Motor neuron (in vitro differentiated cells): ENCODE measurements at regions of chr13 and their contacts with region 1.

Region 1: DNA sequence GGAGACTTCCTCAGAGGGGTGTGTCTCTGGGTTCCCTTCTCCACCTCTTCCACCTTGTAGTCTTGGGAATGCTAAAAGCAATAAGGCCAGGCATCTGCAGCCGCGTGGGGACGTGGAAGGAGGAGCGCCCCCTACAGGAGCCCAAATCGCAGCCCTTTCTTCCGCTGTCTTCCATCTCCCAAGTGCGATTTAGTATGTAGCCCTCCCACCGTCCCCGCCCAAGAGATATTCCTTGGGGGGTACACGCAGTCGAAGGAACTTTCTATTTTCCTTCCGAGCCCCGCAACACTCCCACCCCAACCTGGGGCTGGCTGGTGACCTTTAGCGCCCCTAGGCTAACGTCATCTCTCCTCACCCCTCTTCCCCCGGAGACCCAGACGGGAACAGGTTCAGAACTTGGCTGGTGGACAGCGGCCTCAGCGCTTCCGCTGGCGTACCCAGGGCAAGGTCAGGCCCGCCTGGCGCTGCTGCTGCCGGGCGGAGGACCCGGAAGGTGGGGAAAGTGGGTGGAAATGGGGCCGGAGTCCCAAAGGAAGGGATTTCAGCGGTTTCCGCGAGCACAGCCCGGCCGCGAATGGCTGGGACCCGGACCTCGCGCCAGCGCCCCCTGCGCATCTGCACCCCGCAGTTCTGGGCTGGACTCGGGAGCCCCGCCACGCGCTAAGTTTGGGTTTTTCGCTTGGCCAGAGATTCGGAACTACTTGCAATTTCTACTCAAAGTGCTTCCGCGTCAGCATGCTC is 2.1 kb upstream of the PCDH8 start:
- ATAC-seq: peak; percentile 10 to 90 (median 31)
- H3K4me3 ChIP-seq: peak overlapping the region; percentile 29 to 52 (median 40)
- H3K27ac ChIP-seq: peak overlapping the region; percentile 70 to 71
- H3K4me1 ChIP-seq: peaks cover 16 to 27% of the 10 kb centered on the region in 2 donors

Region 2: DNA sequence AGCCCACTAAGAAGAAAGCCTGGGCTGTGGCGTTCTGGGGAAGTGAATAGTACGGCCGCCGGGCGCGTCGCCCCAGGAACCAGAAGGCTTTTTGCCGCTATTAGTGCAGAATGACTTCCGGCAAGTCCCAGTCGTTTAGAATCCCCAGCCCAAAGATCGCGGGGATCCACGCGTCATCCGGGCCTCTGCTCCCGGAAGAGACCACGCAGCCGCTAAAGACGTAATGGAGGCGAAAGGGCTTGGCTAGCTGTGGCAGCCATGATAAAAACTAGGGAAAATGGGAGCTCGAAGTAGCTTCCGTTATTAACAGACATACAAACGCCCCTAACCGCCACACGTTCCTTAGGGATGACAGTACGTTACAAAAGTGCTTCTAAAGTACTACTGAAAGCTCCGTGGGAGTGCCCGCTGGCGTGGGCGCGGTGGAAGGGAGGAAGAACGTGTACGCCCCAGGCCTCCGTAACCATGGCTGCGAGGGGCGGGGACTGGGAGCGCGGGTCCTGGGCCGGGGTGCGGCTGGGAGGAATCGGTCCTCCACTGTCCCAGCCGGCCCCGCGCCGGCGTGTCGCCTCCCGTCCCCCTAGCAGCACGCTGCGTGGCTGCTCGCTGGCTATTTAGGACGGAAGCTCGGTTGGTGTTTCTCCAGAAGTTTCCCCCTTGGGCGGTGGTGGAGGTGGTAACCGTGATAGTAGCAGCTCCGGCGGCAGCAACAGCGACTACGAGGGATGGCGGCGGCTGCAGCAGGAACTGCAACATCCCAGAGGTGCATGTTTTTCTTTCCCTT is 198.2 kb before region 1 on chr13 and contains the start of gene SUGT1:
- in situ Hi-C with region 1: loop called in 1 of 9 experiments (anchors 25 kb)
- ATAC-seq: peak; percentile 91 to 98 (median 97)
- H3K4me3 ChIP-seq: peak within 1 kb of the TSS; percentile 45 to 71 (median 54)
- H3K27ac ChIP-seq: peak within 1 kb of the TSS; percentile 99 to 100
- H3K4me1 ChIP-seq: peaks cover 10 to 17% of the 10 kb centered on the region in 2 donors
- total RNA-seq, gene SUGT1: 55.3 to 68.2 (median 62.3) TPM

Region 3: DNA sequence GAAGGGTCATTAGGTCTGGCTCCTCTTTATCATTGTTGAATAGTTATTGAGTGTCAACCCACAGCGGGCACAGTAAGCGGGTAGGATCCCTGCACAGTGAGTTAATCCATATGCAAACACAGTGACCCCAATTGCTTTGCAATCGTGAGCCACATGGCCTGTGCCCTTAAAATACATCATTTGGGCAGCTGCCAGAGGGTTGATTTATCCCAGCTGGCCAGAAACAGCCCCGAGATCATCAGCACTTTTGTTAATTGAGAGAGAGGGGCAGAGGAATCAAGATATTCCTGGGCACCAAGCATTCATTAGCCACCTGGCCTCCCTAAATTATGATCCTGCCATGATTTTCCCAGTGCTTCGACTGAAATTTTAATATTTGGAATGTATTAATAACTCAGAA is 101.1 kb before region 1 on chr13:
- in situ Hi-C with region 1: no loop called
- ATAC-seq: peak in 5 of 8 experiments; percentile 45 to 76 (median 60)
- H3K4me3 ChIP-seq: no peak overlapping the region
- H3K27ac ChIP-seq: no peak overlapping the region
- H3K4me1 ChIP-seq: peaks cover 6 to 12% of the 10 kb centered on the region in 2 donors

Region 4: DNA sequence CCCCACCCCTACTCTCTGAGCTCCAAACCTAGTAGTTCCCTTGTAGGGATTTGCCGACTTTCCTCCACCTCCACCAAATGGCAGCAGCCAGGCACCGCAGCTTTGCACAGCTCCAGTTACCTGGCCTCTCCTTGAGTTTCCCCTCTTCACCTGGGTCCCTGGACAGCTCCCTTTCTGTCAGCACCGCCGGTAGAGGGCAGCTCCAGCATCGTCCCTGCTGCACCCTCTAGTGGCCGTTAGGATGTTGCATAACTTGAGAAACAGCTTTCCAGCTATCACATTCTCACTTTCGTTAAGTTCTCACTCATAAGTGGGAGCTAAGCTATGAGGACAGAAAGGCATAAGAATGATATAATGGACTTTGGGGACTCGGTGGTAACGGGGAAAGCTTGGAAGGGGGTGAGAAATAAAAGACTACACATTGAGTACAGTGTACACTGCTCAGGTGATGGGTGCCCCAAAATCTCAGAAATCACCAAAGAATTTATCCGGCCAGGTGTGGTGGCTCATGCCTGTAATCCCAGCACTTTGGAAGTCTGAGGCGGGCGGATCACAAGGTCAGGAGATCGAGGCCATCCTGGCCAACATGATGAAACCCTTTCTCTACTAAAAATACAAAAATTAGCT is 117.6 kb after region 1 on chr13:
- in situ Hi-C with region 1: loop called in 1 of 9 experiments (anchors 25 kb)
- ATAC-seq: peak; percentile 32 to 98 (median 82)
- H3K4me3 ChIP-seq: no peak overlapping the region
- H3K27ac ChIP-seq: no peak overlapping the region
- H3K4me1 ChIP-seq: peaks cover 28 to 47% of the 10 kb centered on the region in 2 donors

Region 5: GRCh38 chr13:53191091-53191490 is 340.5 kb after region 1 on chr13:
- in situ Hi-C with region 1: loop called in 1 of 9 experiments (anchors 25 kb)
- ATAC-seq: peak in 1 of 8 experiments; percentile 43
- H3K4me3 ChIP-seq: no peak overlapping the region
- H3K27ac ChIP-seq: no peak overlapping the region
- H3K4me1 ChIP-seq: no peaks in the 10 kb centered on the region